WTC11 (cell line): ENCODE measurements at regions of chr9 and their contacts with region 1.

Region 1: GRCh38 chr9:23739753-23740152 is 86.3 kb downstream of the ELAVL2 start:
- DNase-seq: no peak
- ATAC-seq: no peak
- H3K4me3 Mint-ChIP-seq: peak overlapping the region; percentile 61
- H3K27ac Mint-ChIP-seq: peak overlapping the region; percentile 94
- H3K4me1 Mint-ChIP-seq: peaks cover 93% of the 10 kb centered on the region
- H3K27me3 Mint-ChIP-seq: no peaks in the 10 kb centered on the region
- CTCF ChIP-seq: no peak

Region 2: GRCh38 chr9:23926378-23926777 is 186.6 kb after region 1 on chr9:
- CTCF ChIA-PET with region 1: no interaction called
- POLR2A ChIA-PET with region 1: no interaction called
- DNase-seq: no peak
- ATAC-seq: no peak
- H3K4me3 Mint-ChIP-seq: no peak overlapping the region
- H3K27ac Mint-ChIP-seq: no peak overlapping the region
- H3K4me1 Mint-ChIP-seq: peaks cover 7% of the 10 kb centered on the region; the same call in 1 of the 2 replicates
- H3K27me3 Mint-ChIP-seq: no peaks in the 10 kb centered on the region; the same call in none of the 2 replicates
- CTCF ChIP-seq: no peak

Region 3: GRCh38 chr9:24258626-24259025 is 518.9 kb after region 1 on chr9:
- CTCF ChIA-PET with region 1: no interaction called
- POLR2A ChIA-PET with region 1: interaction called, 12 read pairs
- DNase-seq: no peak
- ATAC-seq: no peak
- H3K4me3 Mint-ChIP-seq: no peak overlapping the region
- H3K27ac Mint-ChIP-seq: no peak overlapping the region
- H3K4me1 Mint-ChIP-seq: no peaks in the 10 kb centered on the region
- H3K27me3 Mint-ChIP-seq: no peaks in the 10 kb centered on the region
- CTCF ChIP-seq: no peak